ENCODE measurements at regions of chr1 and their contacts with region 1.

Region 1: GRCh38 chr1:9942939-9943788 is at the starts of genes LZIC and NMNAT1:
- DNase-seq: peak; percentile 96
- ATAC-seq: peak; percentile 99
- total RNA-seq, gene LZIC: 41.8 TPM
- total RNA-seq, gene NMNAT1: 19.3 TPM

Region 2: DNA sequence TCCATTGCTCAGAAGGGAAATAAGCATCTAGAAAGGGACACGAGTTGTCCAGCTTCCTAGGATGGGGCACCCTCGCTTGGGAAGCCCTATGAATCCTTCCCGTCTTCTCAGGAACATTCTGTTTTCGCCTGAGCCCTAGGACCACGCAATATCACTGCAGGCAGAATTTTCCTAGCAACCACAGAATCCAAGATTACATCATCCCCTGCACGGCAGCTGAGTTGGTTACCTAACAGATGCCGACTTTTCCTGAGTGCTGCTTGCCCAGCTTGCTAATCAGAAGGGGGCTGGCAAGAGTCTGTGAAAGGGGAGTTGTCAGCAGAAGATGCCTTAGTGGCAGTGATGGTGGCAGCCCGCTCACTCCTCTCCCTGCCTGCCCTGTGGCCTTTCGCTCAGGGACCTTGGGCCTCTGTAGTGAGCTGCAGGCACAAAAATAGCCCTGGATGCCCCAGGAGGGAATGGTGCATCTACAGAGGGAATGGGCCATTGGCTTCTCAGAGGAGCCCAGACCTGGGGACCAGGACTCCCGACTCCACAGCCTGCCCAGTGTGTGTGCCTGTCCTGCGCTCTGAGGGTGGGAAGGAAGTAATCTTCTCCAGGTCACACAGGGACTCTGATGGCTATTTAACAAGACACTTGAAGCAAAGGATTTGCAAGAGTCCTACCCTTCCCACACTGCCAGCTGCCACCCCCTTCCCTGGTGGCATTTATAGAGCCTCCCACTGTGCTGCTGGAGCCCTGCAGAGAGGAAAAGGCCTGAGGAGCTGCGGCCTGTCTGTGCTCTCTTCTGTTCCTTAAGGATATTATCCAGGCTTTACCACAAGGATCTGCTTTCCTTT is 90.5 kb before region 1 on chr1:
- intact Hi-C with region 1: no loop called
- DNase-seq: no peak
- ATAC-seq: peak; percentile 64

Region 3: DNA sequence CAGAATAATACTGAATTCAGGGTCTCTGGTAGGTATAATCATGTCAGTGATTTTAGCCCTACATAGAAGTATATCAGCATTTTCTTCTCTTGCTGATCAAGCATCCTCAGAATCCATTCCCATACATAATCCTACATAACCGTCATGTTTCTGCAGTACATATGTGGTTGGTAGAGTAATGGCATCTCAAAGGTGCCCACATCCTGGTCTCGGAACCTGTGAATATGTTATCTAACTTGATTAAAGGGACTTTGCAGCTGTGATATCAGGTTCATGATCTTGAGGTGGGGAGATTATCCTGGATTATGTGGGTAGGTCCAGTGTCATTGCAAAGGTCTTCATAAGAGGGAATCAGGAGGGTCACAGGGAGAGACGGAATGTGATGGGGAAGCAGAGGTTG is 197.8 kb after region 1 on chr1:
- intact Hi-C with region 1: no loop called
- DNase-seq: no peak
- ATAC-seq: no peak

Region 4: GRCh38 chr1:10152709-10153284 is 209.6 kb after region 1 on chr1:
- intact Hi-C with region 1: loop called (anchors 10 kb)
- DNase-seq: peak; percentile 75
- ATAC-seq: no peak

Region 5: GRCh38 chr1:10338047-10338446 is 394.9 kb after region 1 on chr1:
- intact Hi-C with region 1: loop called (anchors 5 kb)
- DNase-seq: no peak
- ATAC-seq: peak; percentile 88

Measured in Right ventricle myocardium inferior (tissue), 1 donor.